Activated CD4-positive, alpha-beta T cell treated with anti-CD3 and anti-CD28 coated beads for 36 hours (primary cell): ENCODE measurements at regions of chr10 and their contacts with region 1.

Region 1: DNA sequence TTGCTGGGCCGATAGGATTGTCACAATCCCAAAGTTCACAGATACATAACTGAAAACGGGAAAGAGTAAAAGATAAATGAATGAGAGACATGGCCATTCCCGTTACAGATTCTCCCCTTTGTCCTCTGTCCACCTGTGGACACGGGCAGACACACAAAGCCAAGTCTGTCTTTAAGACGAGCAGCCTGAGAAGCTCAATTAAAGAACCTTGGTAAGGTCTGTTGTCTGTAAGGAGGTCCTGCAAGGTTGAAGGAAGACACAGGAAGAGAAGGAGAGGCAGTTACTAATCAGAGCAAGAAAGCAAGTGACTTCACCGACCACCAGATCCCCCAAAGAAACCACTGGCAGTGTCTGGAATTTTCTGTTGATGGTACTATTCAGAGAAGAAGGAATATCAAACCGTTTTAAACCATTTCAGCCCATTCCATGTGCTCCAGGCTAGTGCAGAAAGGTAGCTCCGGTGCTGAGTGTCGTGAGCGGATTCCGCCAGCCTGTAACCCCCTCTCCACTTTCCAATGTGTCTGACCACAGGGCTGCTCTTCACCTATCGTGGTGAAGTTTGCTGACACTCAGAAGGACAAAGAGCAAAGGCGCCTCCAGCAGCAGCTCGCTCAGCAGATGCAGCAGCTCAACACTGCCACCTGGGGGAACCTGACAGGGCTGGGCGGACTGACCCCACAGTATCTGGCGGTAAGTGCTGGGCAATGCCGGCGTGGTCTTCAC is 252.6 kb downstream of the CELF2 start:
- DNase-seq: peak; percentile 88
- ATAC-seq: peak; percentile 60
- H3K4me3 Mint-ChIP-seq: peak overlapping the region; percentile 27
- H3K27ac Mint-ChIP-seq: peak overlapping the region; percentile 81
- H3K4me1 Mint-ChIP-seq: peaks cover 90% of the 10 kb centered on the region
- H3K27me3 Mint-ChIP-seq: no peaks in the 10 kb centered on the region

Region 2: DNA sequence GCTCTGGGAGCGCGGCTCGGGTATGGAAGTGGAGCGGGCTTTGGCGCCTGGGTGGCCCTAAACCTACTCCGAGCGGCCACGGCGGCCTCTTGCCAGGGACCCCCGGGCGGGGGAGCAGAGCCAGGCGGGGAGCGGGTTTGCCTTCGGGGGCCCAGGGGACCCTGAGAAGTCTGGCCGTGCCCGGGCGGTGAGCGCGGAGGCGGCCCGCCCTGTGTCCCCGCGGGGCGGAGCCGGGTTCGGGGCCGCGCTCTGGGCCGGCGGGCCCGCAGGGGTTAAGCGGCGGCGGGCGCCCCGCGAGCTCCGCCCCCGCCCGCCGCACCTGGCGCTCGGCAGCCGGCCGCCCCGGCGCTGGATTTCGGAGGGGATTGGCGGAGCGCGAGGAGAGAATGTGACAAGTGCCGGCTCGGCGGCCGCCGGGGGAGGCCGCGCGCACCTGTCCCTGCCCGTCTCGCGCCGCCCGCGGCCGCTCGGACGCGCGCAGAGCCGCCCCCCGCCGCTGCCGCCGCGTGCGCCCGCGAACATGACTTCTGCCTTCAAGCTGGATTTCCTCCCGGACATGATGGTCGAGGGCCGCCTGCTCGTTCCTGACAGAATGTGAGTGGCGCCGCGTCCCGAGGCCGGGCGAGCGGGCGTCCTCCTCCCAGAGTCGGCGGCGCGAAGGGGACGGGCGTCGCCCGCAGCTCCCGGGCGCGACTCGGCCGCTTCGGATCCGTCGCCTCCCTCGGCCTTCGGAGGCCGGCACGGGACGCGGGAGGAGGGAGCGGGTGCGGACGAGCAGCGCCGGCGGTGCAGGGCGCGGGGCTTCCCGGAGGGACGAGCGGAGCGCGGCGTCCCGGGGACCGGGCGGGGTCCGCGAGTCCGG is 252.5 kb before region 1 on chr10 and contains the start of gene CELF2:
- CTCF ChIA-PET with region 1: no interaction called
- POLR2A ChIA-PET with region 1: no interaction called
- intact Hi-C with region 1: loop called (anchors 5 kb)
- DNase-seq: peak; percentile 76
- ATAC-seq: peak; percentile 78
- H3K4me3 Mint-ChIP-seq: peak within 1 kb of the TSS; percentile 80
- H3K27ac Mint-ChIP-seq: peak within 1 kb of the TSS; percentile 77
- H3K4me1 Mint-ChIP-seq: peaks cover 21% of the 10 kb centered on the region
- H3K27me3 Mint-ChIP-seq: peaks cover 56% of the 10 kb centered on the region
- total RNA-seq, gene CELF2: 102 to 119 TPM

Region 3: DNA sequence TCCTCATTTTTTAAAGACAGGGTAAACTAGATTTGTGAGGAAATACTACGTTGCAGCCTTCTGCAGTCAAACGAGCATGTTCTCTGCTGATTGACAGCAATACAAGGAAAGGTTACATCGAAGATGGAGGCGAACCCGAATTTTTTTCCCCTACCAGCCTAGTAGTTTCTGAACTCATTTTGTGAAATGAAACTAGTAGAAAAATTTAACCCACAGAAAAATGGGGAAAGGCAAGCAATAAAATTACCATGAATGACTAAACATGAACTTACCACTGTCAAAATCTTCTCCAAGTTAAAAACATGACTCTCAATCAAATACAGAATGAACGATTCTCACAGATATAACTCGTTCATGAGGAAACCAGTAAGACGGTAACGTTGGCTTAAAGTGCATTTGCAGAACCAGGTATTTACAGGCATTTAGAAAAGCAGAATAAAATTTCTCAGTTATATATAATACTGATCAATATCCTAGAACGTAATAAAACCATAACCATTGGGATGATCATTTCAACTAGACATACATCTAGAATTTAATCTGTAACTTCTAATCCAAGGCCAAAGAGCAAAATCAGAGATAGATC is 178.7 kb before region 1 on chr10:
- CTCF ChIA-PET with region 1: no interaction called
- POLR2A ChIA-PET with region 1: no interaction called
- intact Hi-C with region 1: loop called in 1 of 2 experiments (anchors 5 kb)
- DNase-seq: peak; percentile 55
- ATAC-seq: peak; percentile 68
- H3K4me3 Mint-ChIP-seq: no peak overlapping the region
- H3K27ac Mint-ChIP-seq: no peak overlapping the region
- H3K4me1 Mint-ChIP-seq: peaks cover 23% of the 10 kb centered on the region
- H3K27me3 Mint-ChIP-seq: no peaks in the 10 kb centered on the region

Region 4: DNA sequence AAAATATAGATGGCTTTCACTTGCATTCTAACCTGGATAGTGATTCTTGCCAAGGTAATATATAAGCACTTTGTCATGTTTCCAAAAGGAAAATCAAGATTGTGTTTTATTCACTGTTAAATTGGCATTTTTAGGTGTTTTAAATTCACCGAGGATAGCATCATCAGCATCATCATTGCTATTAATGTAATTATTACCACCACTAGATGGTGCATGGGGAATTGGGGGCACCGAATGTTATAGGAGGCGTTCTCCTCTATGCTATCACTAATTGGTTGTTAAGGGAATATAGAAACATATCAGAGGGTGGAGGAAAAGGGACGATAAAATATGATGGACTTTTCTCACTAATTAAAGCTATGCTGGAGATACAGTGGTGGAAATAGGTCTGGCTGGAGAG is 157.1 kb before region 1 on chr10:
- CTCF ChIA-PET with region 1: interaction called, 3 read pairs
- POLR2A ChIA-PET with region 1: no interaction called
- intact Hi-C with region 1: loop called (anchors 1 to 2 kb)
- DNase-seq: peak; percentile 21
- ATAC-seq: peak; percentile 44
- H3K4me3 Mint-ChIP-seq: no peak overlapping the region
- H3K27ac Mint-ChIP-seq: no peak overlapping the region
- H3K4me1 Mint-ChIP-seq: peaks cover 34% of the 10 kb centered on the region
- H3K27me3 Mint-ChIP-seq: no peaks in the 10 kb centered on the region

Region 5: GRCh38 chr10:11165591-11166543 is 104.4 kb before region 1 on chr10:
- CTCF ChIA-PET with region 1: interaction called, 7 read pairs
- POLR2A ChIA-PET with region 1: interaction called, 4 read pairs
- intact Hi-C with region 1: loop called (anchors 1 to 2 kb)
- DNase-seq: peak; percentile 85
- ATAC-seq: peak; percentile 57
- H3K4me3 Mint-ChIP-seq: no peak overlapping the region
- H3K27ac Mint-ChIP-seq: peak overlapping the region; percentile 99
- H3K4me1 Mint-ChIP-seq: peaks cover 33% of the 10 kb centered on the region
- H3K27me3 Mint-ChIP-seq: no peaks in the 10 kb centered on the region

Region 6: DNA sequence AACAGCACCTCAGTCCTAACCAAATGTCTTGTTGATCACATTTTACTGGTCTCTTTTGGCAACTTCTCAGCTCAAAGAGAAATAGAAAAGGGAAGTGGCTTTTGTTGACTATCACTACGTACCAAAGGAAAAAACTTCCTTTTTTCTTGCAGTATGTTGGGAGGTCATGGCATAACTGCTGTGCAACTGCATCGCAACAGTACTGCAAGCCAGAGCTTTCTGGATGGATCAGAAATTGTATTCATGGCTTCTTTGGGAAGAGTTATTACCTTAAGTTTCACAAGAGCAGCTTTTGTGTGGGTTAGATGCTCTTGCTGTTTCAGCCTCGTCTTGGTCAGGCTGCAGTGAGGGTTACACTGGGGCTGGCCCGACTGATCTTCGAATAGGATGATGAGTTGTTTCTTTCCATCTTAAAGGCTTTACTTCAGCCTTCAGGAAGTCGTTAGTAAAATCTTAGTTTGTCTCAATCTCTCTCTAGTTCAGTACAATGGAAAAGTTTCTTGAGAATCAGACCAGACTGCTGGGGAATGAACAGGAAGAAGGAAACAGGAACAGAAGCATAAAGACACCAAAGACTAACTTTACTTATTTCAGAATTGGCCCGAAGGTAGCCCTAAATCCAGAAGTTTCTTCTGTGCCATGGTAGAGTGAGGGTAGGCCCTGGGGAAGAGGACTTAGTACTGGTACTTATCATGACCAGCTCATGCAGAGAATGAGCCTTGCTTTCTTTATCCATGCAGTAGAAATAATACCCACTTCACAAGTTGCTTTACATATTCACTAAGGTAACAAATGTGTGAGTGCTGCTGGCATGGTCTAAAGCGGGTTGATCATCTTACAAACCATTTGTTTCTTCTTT is 99.1 kb before region 1 on chr10:
- CTCF ChIA-PET with region 1: interaction called, 7 read pairs
- POLR2A ChIA-PET with region 1: interaction called, 5 read pairs
- intact Hi-C with region 1: loop called (anchors 1 to 2 kb)
- DNase-seq: peak; percentile 80
- ATAC-seq: peak; percentile 49
- H3K4me3 Mint-ChIP-seq: no peak overlapping the region
- H3K27ac Mint-ChIP-seq: no peak overlapping the region
- H3K4me1 Mint-ChIP-seq: peaks cover 41% of the 10 kb centered on the region
- H3K27me3 Mint-ChIP-seq: no peaks in the 10 kb centered on the region

Region 7: DNA sequence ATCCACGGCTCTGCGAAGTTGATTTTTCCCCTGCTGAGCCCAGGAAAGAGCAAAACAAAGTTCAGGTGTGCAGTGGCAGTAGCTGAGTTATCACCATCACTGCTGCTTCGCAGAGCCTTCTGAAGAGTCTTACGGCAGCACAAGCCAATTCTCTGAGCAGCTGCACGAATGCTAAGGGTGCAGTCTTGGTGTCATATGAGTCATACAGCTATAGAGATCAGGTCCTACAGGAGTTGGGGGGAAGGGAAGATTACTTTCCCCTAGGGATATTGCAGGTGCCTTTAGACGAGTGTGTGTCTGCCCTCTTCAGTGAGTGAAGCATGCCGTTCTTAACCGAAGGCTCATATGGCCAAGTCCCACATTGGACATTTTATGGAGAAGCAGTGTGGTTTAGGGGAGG is 24.8 kb before region 1 on chr10:
- CTCF ChIA-PET with region 1: interaction called, 8 read pairs
- POLR2A ChIA-PET with region 1: no interaction called
- intact Hi-C with region 1: loop called in 1 of 2 experiments (anchors 2 kb)
- DNase-seq: peak; percentile 63
- ATAC-seq: peak; percentile 76
- H3K4me3 Mint-ChIP-seq: no peak overlapping the region
- H3K27ac Mint-ChIP-seq: no peak overlapping the region
- H3K4me1 Mint-ChIP-seq: peaks cover 14% of the 10 kb centered on the region
- H3K27me3 Mint-ChIP-seq: no peaks in the 10 kb centered on the region